ENCODE measurements at regions of chr21 and their contacts with region 1.

Region 1: GRCh38 chr21:39349211-39350093 is 564 bp upstream of the HMGN1 start:
- DNase-seq: peak; percentile 96
- H3K4me3 Mint-ChIP-seq: peak overlapping the region; percentile 99
- H3K27ac Mint-ChIP-seq: peak overlapping the region; percentile 100
- H3K4me1 Mint-ChIP-seq: peaks cover 45% of the 10 kb centered on the region
- H3K27me3 Mint-ChIP-seq: peaks cover 19% of the 10 kb centered on the region

Region 2: DNA sequence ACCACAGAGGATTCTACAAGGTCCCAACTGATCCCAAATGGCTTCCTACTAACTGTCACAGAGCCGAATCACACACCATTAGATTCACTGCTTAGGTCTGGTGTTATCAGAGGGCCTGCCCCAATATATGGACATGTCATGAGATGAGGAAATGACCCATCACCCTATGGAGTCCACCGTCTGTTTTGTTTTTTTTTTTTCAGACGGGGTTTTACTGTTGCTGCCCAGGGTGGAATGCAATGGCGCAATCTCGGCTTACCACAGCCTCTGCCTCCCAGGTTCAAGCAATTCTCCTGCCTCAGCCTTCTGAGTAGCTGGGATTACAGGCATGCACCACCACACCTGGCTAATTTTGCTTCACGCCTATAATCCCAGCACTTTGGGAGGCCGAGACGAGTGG is 627.5 kb before region 1 on chr21:
- intact Hi-C with region 1: no loop called
- DNase-seq: no peak
- H3K4me3 Mint-ChIP-seq: no peak overlapping the region
- H3K27ac Mint-ChIP-seq: no peak overlapping the region
- H3K4me1 Mint-ChIP-seq: no peaks in the 10 kb centered on the region
- H3K27me3 Mint-ChIP-seq: no peaks in the 10 kb centered on the region

Region 3: GRCh38 chr21:39153373-39153772 is 196.1 kb before region 1 on chr21:
- intact Hi-C with region 1: no loop called
- DNase-seq: no peak
- H3K4me3 Mint-ChIP-seq: no peak overlapping the region
- H3K27ac Mint-ChIP-seq: no peak overlapping the region
- H3K4me1 Mint-ChIP-seq: no peaks in the 10 kb centered on the region
- H3K27me3 Mint-ChIP-seq: peaks cover 6% of the 10 kb centered on the region

Region 4: DNA sequence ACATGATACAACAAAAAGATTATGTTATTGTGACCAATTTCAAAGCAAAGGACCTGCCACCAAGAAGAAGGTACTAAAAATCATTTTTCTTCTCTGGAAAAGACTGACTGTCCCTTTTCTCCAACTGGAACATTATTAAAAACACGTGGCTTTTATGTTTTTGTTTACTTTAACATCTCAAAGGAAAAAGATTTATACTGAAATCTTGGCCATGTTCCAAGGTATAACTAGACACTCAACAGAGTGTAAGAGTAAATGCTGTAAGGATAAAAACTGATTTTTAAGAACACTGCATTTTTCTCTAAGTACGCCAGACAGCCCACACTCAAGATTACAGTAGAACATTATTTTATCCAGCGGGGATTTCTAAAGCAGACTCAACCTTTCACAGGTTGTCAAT is 98.1 kb before region 1 on chr21:
- intact Hi-C with region 1: no loop called
- DNase-seq: no peak
- H3K4me3 Mint-ChIP-seq: no peak overlapping the region
- H3K27ac Mint-ChIP-seq: no peak overlapping the region
- H3K4me1 Mint-ChIP-seq: no peaks in the 10 kb centered on the region
- H3K27me3 Mint-ChIP-seq: no peaks in the 10 kb centered on the region

Region 5: GRCh38 chr21:39313571-39314142 is 35.8 kb before region 1 on chr21 and contains the start of gene BRWD1:
- intact Hi-C with region 1: loop called (anchors 1 kb)
- DNase-seq: peak; percentile 75
- H3K4me3 Mint-ChIP-seq: peak within 1 kb of the TSS; percentile 92
- H3K27ac Mint-ChIP-seq: peak within 1 kb of the TSS; percentile 97
- H3K4me1 Mint-ChIP-seq: peaks cover 31% of the 10 kb centered on the region
- H3K27me3 Mint-ChIP-seq: no peaks in the 10 kb centered on the region
- total RNA-seq, gene BRWD1: 34.7 and 38.1 TPM in 2 replicates

Region 6: GRCh38 chr21:39379986-39380891 is 30.8 kb after region 1 on chr21:
- intact Hi-C with region 1: loop called (anchors 1 kb)
- DNase-seq: peak; percentile 92
- H3K4me3 Mint-ChIP-seq: peak overlapping the region; percentile 94
- H3K27ac Mint-ChIP-seq: peak overlapping the region; percentile 91
- H3K4me1 Mint-ChIP-seq: peaks cover 45% of the 10 kb centered on the region
- H3K27me3 Mint-ChIP-seq: peaks cover 7% of the 10 kb centered on the region

Region 7: GRCh38 chr21:39388038-39388810 is 38.8 kb after region 1 on chr21:
- intact Hi-C with region 1: loop called (anchors 1 kb)
- DNase-seq: peak; percentile 80
- H3K4me3 Mint-ChIP-seq: peak overlapping the region; percentile 86
- H3K27ac Mint-ChIP-seq: peak overlapping the region; percentile 87
- H3K4me1 Mint-ChIP-seq: peaks cover 19% of the 10 kb centered on the region
- H3K27me3 Mint-ChIP-seq: no peaks in the 10 kb centered on the region

Region 8: DNA sequence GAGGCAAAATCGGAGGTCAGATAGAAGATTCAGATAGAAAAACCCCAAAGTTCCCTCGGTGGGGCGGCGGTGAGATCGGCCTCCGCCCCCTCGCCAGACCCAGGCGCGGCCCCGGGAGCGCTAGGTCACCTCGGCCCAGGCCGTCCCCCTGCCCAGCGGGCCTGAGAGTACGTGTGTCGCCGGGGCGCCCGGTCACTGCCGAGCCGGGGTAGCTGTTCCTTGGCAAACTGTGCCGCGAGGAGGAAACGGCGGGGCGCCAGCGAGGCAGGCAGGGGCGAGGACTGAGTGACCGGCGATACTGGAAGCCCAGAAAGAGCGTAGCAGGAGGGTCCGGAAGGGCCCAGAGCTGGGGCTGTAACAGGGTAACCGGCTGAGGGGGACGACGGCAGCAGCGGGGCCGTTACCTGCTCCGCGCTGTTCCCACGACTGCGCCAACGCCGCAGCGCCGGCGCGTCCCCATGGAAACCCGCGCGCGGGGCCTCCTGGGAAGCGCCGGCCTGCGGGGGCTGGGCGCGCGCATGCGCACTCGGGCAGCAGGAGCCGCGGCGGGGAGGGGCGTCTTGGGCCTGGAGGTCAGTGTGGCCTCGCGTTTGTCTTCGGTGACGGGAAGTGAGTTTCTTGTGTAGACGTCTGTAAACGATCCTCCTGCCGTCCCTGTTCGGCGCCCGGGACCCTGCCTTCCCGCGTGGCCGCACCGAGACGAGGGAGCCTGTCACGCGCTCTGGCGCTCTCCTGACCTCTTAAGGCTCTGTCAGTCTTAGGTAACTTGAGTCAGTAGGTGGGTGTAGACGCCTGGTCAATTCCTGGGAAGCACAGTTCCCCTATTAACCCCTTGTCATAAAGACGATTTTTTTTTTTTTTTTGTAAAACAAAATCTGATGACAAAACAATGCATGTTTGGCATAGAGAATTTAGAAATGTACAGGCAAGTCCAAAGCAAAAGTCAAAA is 96.1 kb after region 1 on chr21 and contains the start of gene LCA5L:
- intact Hi-C with region 1: loop called (anchors 1 kb)
- DNase-seq: peak; percentile 90
- H3K4me3 Mint-ChIP-seq: peak within 1 kb of the TSS; percentile 93
- H3K27ac Mint-ChIP-seq: peak within 1 kb of the TSS; percentile 95
- H3K4me1 Mint-ChIP-seq: peaks cover 14% of the 10 kb centered on the region
- H3K27me3 Mint-ChIP-seq: peaks cover 33% of the 10 kb centered on the region
- total RNA-seq, gene LCA5L: not detected in 2 replicates

Measured in activated T-helper 1 cell treated with anti-CD3 and anti-CD28 coated beads, Interleukin-12 subunit alpha, Interleukin-12 subunit beta, Interleukin-2, Interleukin-4 antibody, amounts not matched to agents 30 ng/mL and 10 ng/mL and 1 ng/mL, durations not matched to agents 14 hours and 24 hours and 36 hours (primary cell).